ENCODE measurements at regions of chr18 and their contacts with region 1.

Region 1: DNA sequence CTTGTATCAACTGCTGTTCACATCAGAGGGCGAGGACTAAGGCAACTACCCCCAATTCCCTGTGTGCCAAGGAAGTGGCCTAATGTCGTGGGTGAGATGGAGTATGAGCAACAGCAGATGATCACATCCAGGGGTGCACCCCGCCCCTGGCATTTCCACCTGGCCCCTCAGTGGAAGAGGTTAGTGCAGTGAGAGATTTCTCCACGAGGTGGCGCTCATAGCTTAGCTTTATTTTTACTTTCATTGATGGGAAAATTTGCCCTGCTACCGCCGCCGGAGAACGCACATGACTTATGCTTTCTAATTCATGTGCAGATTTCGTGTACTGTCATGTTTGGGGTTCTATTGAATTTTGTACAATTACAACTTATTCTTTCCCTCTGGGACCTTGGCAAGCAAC is 470.6 kb upstream of the MEX3C start:
- DNase-seq: peak; percentile 66
- H3K4me3 Mint-ChIP-seq: no peak overlapping the region
- H3K27ac Mint-ChIP-seq: no peak overlapping the region
- H3K4me1 Mint-ChIP-seq: no peaks in the 10 kb centered on the region
- H3K27me3 Mint-ChIP-seq: peaks cover 16% of the 10 kb centered on the region

Region 2: DNA sequence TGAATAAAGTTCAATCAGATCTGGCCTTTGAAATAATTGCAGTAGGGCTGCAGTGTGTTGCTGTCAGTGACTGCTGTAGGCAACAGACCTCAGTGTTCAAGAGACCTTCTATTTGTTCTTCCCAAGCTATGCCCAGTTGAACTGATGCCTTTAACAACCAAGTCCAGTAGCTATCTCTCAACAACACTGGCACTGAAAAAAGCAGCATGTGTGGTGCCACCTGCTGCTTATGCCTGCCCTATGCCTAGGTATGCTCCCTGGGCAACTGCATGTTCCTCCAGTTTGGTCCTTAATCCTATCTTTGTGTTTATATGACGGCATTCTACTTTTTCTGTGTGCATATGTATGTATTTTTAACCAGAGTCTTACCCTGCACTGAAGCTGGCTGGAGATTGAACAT is 53.3 kb after region 1 on chr18:
- CTCF ChIA-PET with region 1: no interaction called
- POLR2A ChIA-PET with region 1: no interaction called
- intact Hi-C with region 1: loop called (anchors 2 kb)
- DNase-seq: peak; percentile 31
- H3K4me3 Mint-ChIP-seq: no peak overlapping the region
- H3K27ac Mint-ChIP-seq: no peak overlapping the region
- H3K4me1 Mint-ChIP-seq: no peaks in the 10 kb centered on the region
- H3K27me3 Mint-ChIP-seq: peaks cover 2% of the 10 kb centered on the region

Region 3: GRCh38 chr18:52694804-52695203 is 1026.7 kb after region 1 on chr18:
- CTCF ChIA-PET with region 1: no interaction called
- POLR2A ChIA-PET with region 1: no interaction called
- intact Hi-C with region 1: loop called (anchors 5 kb)
- DNase-seq: no peak
- H3K4me3 Mint-ChIP-seq: no peak overlapping the region
- H3K27ac Mint-ChIP-seq: no peak overlapping the region
- H3K4me1 Mint-ChIP-seq: no peaks in the 10 kb centered on the region
- H3K27me3 Mint-ChIP-seq: no peaks in the 10 kb centered on the region

Measured in activated CD4-positive, alpha-beta memory T cell treated with anti-CD3 and anti-CD28 coated beads for 36 hours (primary cell).